Transverse colon (tissue), 4 donors: ENCODE measurements at regions of chr10 and their contacts with region 1.

Region 1: DNA sequence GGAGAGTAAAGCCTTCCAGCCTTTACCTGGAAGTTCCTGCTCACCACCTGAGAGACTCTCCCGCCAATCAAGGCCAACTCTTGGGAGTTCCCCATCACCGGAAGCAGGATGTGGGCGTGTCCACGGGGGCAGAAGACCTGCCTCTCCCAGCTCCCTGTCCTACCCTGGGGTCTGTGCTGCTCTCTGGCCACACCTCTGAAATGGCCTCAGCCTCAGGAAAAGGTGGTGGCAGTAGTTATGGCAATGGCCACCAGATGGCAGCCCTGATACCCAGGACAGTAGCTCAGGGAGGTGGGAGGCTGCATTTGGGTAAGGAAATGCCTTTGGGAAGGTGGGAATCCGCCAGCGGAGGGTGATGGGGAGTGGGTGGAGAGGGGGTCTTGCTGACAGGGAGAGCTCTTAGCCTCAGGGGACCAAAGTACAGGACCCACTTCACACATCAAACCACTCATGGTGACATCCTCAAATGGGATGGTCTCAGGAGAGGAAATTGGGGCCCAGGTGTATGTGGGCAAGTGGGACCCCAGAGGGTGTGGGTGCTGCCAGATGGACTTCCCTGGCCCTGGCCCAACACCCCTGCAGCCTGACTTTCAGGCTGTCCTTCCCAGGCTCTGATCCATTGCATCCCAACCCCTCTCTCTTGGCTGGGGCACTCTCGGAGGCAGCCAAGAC is 33.9 kb downstream of the KAZALD1 start:
- DNase-seq: peak; percentile 82
- H3K4me3 ChIP-seq: no peak overlapping the region
- H3K27ac ChIP-seq: no peak overlapping the region
- H3K4me1 ChIP-seq: no peaks in the 10 kb centered on the region
- H3K27me3 ChIP-seq: peaks cover 85% of the 10 kb centered on the region
- CTCF ChIP-seq: peak; percentile 67 to 93 (median 85)
- EP300 ChIP-seq: no peak
- POLR2A ChIP-seq: no peak

Region 2: DNA sequence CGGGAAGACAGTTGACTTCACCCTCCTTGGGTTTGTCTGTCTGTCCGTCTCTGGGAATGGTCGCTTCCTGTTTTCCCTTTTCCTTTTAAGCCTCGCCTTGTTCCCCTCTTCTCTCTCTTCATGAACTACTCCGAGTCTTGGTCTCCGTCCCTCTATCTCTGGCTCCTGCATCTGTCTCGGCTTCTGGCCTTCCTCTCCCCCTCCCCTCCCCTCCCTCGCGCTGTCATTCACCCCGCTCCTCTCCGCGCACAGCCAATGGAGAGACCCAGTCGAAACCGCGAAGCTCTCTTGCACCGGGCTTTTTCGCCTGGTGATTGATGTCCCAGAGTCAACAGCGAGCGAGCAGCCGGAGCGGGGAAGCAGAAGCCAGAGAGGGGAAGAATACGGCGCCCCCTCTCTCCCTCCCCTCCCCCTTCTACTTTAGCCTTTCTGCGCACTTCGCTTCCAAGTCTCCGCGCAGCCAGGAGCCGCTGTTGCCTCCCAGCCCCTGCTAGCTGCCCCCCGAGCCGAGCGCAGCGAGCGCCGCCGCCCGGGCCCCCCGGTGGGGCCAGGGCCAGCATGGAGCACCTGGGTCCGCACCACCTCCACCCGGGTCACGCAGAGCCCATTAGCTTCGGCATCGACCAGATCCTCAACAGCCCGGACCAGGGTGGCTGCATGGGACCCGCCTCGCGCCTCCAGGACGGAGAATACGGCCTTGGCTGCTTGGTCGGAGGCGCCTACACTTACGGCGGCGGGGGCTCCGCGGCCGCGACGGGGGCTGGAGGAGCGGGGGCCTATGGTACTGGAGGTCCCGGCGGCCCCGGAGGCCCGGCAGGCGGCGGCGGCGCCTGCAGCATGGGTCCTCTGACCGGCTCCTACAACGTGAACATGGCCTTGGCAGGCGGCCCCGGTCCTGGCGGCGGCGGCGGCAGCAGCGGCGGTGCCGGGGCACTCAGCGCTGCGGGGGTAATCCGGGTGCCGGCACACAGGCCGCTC is 35.6 kb after region 1 on chr10 and contains the start of gene TLX1:
- in situ Hi-C with region 1: no loop called
- intact Hi-C with region 1: no loop called
- DNase-seq: no peak
- H3K4me3 ChIP-seq: peak within 1 kb of the TSS in 2 of 4 donors; percentile 15 to 42
- H3K27ac ChIP-seq: no peak within 1 kb of the TSS
- H3K4me1 ChIP-seq: peaks cover 9 to 42% (median 26%) of the 10 kb centered on the region in 4 donors
- H3K27me3 ChIP-seq: peaks cover 100% of the 10 kb centered on the region
- CTCF ChIP-seq: no peak
- EP300 ChIP-seq: no peak
- POLR2A ChIP-seq: no peak
- total RNA-seq, gene TLX1: 0.14 to 0.60 TPM in 2 of 4 donors, not detected in the others

Region 3: DNA sequence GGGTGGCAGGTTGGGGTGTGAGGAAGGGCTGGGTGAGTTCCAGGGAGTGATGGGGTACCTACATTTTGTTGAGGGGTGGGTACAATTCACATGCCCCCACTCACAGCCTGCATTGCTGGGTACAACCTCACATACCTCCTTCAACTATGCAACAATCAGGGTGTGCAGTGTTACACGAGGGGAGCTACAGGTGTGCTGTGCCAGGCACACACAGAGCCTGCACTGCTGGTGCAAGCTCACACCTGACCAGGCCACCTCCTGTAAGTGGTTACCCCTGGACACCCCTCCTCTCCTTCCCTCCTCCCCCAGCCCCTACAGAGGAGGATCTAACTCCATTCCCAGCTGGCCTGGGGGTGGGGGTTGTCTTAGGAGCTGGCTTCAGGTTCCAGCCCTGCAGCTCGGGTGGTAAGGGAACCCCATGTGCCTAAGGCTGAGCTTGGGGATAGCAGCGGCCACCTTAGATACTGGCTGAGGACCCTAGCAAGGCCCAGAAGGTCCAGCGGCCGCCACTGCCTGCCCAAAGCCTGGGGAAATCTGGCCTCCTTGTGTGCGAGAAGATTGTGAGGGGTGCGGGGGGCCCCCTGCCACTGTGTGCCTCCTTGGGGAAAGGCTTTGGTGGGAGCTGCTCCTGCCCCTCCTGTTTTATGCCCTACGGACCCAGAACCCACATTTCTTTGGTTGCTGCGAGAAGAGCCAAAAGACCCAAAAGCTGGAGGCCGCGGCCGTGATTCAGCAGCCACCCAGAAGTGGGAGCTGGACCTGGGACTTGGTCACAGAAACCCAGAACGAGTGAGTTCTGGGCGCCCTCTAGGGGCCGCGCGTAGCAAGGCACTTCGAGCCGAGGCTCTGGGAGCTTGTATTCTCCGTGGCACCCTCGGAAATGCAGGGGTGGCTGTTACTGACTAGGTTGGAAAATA is 46.2 kb after region 1 on chr10:
- in situ Hi-C with region 1: loop called (anchors 5 to 10 kb)
- intact Hi-C with region 1: loop called (anchors 2 kb)
- DNase-seq: peak; percentile 84
- H3K4me3 ChIP-seq: no peak overlapping the region
- H3K27ac ChIP-seq: no peak overlapping the region
- H3K4me1 ChIP-seq: peaks cover 0 to 20% (median 10%) of the 10 kb centered on the region in 4 donors
- H3K27me3 ChIP-seq: peaks cover 100% of the 10 kb centered on the region
- CTCF ChIP-seq: peak; percentile 92 to 99 (median 98)
- EP300 ChIP-seq: no peak
- POLR2A ChIP-seq: no peak